ENCODE measurements at regions of chr12 and their contacts with region 1.

Region 1: DNA sequence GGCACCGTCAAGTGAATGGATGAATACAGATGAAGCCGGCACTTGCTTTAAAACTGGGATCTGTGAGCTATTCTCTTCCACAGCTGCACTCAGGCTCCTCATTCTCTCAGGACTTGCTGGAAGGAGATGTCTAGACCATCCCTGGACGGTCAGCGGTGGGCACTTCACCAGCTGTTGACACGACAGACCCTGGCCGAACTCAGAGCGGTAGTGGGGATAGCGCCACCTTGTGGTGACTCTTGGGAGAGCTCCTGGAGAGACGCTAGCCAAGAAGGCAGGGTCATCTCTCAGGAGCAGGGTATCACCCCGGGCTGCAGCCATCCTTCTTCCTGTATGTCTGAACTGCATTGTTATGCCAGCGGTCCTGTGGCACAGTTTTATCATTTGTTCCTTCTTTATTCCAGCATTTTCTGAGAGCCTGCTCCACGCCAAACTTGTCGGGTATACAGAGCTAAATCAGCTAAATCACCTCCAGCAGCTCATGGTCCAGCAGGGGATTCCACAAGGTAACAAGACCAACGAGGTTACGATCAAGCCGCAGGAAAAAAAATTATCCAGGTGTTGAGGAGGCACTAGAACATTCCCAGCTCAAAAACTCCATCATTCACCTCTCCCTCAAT is 10.0 kb downstream of the WNT1 start:
- DNase-seq: peak; percentile 62
- H3K4me3 Mint-ChIP-seq: no peak overlapping the region
- H3K27ac Mint-ChIP-seq: no peak overlapping the region
- H3K4me1 Mint-ChIP-seq: no peaks in the 10 kb centered on the region
- H3K27me3 Mint-ChIP-seq: peaks cover 87% of the 10 kb centered on the region
- CTCF ChIP-seq: peak; percentile 78

Region 2: GRCh38 chr12:48779869-48780268 is 208.3 kb before region 1 on chr12:
- CTCF ChIA-PET with region 1: no interaction called
- intact Hi-C with region 1: no loop called
- DNase-seq: no peak
- H3K4me3 Mint-ChIP-seq: no peak overlapping the region
- H3K27ac Mint-ChIP-seq: no peak overlapping the region
- H3K4me1 Mint-ChIP-seq: peaks cover 10% of the 10 kb centered on the region
- H3K27me3 Mint-ChIP-seq: no peaks in the 10 kb centered on the region
- CTCF ChIP-seq: no peak

Region 3: DNA sequence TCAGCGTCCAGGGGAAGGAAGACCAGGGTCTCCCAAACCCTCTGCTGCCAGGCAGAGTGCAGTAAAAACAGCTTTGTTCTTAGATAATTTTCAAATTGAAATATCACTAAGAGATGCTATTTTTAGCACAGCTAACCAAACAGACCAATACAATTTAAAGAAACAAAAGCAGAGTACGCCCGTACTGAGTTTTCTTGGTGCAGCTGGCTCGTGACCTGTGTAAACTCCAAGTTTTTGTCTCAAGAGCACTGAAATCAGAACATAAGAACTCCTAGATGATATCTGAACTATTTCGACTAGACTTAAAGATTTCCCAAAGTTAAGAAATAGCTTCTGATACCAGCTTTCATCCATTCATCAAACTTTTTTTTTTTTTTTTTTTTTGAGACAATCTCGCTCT is 41.2 kb before region 1 on chr12:
- CTCF ChIA-PET with region 1: interaction called, 10 read pairs
- intact Hi-C with region 1: no loop called
- DNase-seq: no peak
- H3K4me3 Mint-ChIP-seq: no peak overlapping the region
- H3K27ac Mint-ChIP-seq: no peak overlapping the region
- H3K4me1 Mint-ChIP-seq: no peaks in the 10 kb centered on the region
- H3K27me3 Mint-ChIP-seq: no peaks in the 10 kb centered on the region
- CTCF ChIP-seq: no peak

Region 4: DNA sequence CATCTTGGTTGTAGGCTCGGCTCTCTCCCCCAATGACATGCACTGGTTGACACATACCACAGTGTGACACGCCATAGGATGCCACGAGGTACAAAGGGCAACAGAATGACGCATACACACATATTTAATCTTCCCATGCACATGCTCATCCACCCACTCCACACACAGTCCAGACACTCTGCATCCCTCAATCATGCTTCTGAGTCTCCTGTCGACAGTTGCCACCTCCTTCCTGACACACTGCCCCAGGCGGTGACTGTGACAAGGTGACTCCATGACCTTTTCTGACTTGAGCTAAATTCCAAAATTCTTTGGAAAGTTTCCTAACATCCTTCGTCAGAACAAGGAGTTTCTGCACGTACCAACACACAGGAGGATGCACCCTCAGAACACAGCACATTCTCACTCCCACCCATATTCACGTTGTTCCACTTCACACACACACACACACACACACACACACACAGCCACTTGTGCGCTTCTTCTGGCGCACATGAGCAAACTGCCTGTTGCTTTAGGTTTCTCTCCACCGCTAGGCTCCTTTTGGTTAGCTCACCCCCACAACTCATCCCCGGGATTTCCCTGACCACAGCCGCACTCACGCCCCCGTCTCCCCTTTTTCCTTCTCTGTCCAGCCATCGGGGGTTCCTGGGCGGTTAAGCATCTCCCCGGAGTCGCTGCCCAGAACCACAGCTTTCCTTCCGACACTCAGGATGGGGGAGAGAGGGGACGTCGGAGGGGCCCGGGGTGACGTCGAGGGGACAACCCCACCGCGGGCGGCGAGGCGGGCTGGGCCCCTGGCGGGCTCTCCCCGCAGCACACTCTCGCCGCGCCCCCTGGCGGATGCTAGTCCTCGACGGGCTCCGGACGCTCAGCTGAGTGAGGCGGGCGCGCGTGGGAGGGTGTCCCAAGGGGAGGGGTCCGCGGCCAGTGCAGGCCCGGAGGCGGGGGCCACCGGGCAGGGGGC is 10.5 kb before region 1 on chr12:
- CTCF ChIA-PET with region 1: interaction called, 12 read pairs
- intact Hi-C with region 1: no loop called
- DNase-seq: peak; percentile 69
- H3K4me3 Mint-ChIP-seq: peak overlapping the region; percentile 61
- H3K27ac Mint-ChIP-seq: no peak overlapping the region
- H3K4me1 Mint-ChIP-seq: peaks cover 46% of the 10 kb centered on the region
- H3K27me3 Mint-ChIP-seq: peaks cover 100% of the 10 kb centered on the region
- CTCF ChIP-seq: peak; percentile 75

Measured in Calu3 (cell line).